Activated T-helper 1 cell treated with anti-CD3 and anti-CD28 coated beads, Interleukin-12 subunit alpha, Interleukin-12 subunit beta, Interleukin-2, Interleukin-4 antibody, amounts not matched to agents 30 ng/mL and 10 ng/mL and 1 ng/mL, durations not matched to agents 14 hours and 24 hours and 36 hours (primary cell): ENCODE measurements at regions of chr6 and their contacts with region 1.

Region 1: GRCh38 chr6:155106456-155107115 is 111.5 kb downstream of the TIAM2 start:
- DNase-seq: no peak
- H3K4me3 Mint-ChIP-seq: peak overlapping the region; percentile 91
- H3K27ac Mint-ChIP-seq: peak overlapping the region; percentile 87
- H3K4me1 Mint-ChIP-seq: peaks cover 79% of the 10 kb centered on the region
- H3K27me3 Mint-ChIP-seq: no peaks in the 10 kb centered on the region

Region 2: DNA sequence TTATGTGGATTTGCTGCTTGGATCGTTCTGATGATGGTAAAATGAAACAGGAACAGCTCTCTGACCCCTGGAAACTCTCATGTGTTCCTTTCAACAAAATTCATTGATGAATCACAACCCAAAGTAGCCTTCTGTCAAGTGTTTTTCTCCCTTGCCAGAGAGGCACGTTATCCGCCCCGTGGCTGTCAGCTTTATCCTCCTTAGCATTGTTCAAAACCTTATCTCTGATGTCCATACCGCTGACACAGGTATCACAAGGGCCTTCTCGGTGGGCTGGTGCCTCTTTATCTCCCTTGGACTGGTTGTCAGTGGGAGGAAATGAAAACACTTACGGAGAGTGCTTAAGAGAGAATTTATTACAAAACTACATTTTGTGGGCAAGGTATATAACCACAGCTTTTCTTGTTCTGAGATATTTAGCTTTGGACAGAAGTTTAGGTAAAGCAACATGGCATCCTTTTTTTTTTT is 26.6 kb before region 1 on chr6:
- intact Hi-C with region 1: loop called (anchors 2 kb)
- DNase-seq: no peak
- H3K4me3 Mint-ChIP-seq: peak overlapping the region; percentile 11
- H3K27ac Mint-ChIP-seq: peak overlapping the region; percentile 79
- H3K4me1 Mint-ChIP-seq: peaks cover 50% of the 10 kb centered on the region
- H3K27me3 Mint-ChIP-seq: peaks cover 2% of the 10 kb centered on the region

Region 3: GRCh38 chr6:155117266-155117665 is 10.7 kb after region 1 on chr6:
- intact Hi-C with region 1: loop called (anchors 1 kb)
- DNase-seq: no peak
- H3K4me3 Mint-ChIP-seq: no peak overlapping the region
- H3K27ac Mint-ChIP-seq: peak overlapping the region; percentile 68
- H3K4me1 Mint-ChIP-seq: peaks cover 47% of the 10 kb centered on the region
- H3K27me3 Mint-ChIP-seq: peaks cover 2% of the 10 kb centered on the region

Region 4: GRCh38 chr6:155126727-155127439 is 20.3 kb after region 1 on chr6:
- intact Hi-C with region 1: loop called (anchors 1 kb)
- DNase-seq: no peak
- H3K4me3 Mint-ChIP-seq: peak overlapping the region; percentile 60
- H3K27ac Mint-ChIP-seq: peak overlapping the region; percentile 92
- H3K4me1 Mint-ChIP-seq: peaks cover 51% of the 10 kb centered on the region
- H3K27me3 Mint-ChIP-seq: no peaks in the 10 kb centered on the region

Region 5: GRCh38 chr6:155154158-155154830 is 47.7 kb after region 1 on chr6:
- intact Hi-C with region 1: loop called (anchors 1 kb)
- DNase-seq: peak; percentile 48
- H3K4me3 Mint-ChIP-seq: peak overlapping the region; percentile 78
- H3K27ac Mint-ChIP-seq: peak overlapping the region; percentile 97
- H3K4me1 Mint-ChIP-seq: peaks cover 90% of the 10 kb centered on the region
- H3K27me3 Mint-ChIP-seq: peaks cover 2% of the 10 kb centered on the region

Region 6: GRCh38 chr6:155223646-155224451 is 117.3 kb after region 1 on chr6:
- intact Hi-C with region 1: loop called (anchors 5 kb)
- DNase-seq: peak; percentile 65
- H3K4me3 Mint-ChIP-seq: peak overlapping the region; percentile 70
- H3K27ac Mint-ChIP-seq: peak overlapping the region; percentile 91
- H3K4me1 Mint-ChIP-seq: peaks cover 34% of the 10 kb centered on the region
- H3K27me3 Mint-ChIP-seq: peaks cover 2% of the 10 kb centered on the region